Activated CD4-positive, alpha-beta memory T cell treated with anti-CD3 and anti-CD28 coated beads for 36 hours (primary cell): ENCODE measurements at regions of chr22 and their contacts with region 1.

Region 1: DNA sequence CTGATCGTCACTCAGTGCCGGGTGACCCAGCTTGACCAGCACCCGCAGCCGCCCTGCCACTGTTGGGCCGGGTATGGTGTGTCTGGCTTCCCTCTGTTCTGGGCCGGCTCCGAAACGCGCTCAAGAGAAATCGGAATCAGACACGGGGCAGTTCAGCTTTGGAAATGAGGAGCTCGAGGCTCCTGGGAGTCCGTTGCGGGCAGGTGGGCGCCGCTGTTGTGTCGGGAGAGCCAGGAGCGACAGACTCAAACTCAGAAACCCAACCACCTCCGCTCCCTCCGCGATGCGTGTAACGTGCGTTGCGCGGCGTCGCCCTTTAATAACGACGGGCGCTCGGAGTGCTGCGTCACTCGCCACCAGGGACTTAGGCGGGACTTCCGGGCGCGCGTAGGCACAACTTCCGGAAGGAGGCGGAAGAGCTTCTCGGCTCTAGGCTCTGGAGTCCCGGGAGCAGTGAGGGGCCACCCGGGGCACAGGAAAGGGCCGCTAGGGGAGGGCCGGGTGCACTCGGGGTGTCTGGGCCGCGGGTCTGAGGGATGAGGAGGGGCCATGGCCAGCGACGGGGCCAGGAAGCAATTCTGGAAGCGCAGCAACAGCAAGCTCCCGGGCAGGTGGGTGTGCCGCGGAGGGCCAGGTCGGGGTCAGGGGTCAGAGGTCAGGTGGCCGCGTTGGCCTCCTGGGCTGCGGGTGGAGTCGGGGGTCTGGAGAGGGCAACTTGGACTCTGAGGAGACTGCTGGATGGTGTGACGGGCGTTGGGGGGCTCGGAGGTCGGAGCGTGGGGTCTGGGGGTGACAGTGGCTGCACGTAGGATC is at the start of gene TBC1D22A:
- DNase-seq: peak; percentile 97
- H3K4me3 Mint-ChIP-seq: peak within 1 kb of the TSS; percentile 100
- H3K27ac Mint-ChIP-seq: peak within 1 kb of the TSS; percentile 97
- H3K4me1 Mint-ChIP-seq: peaks cover 59% of the 10 kb centered on the region
- H3K27me3 Mint-ChIP-seq: no peaks in the 10 kb centered on the region
- total RNA-seq, gene TBC1D22A: 33.2 to 34.9 TPM

Region 2: DNA sequence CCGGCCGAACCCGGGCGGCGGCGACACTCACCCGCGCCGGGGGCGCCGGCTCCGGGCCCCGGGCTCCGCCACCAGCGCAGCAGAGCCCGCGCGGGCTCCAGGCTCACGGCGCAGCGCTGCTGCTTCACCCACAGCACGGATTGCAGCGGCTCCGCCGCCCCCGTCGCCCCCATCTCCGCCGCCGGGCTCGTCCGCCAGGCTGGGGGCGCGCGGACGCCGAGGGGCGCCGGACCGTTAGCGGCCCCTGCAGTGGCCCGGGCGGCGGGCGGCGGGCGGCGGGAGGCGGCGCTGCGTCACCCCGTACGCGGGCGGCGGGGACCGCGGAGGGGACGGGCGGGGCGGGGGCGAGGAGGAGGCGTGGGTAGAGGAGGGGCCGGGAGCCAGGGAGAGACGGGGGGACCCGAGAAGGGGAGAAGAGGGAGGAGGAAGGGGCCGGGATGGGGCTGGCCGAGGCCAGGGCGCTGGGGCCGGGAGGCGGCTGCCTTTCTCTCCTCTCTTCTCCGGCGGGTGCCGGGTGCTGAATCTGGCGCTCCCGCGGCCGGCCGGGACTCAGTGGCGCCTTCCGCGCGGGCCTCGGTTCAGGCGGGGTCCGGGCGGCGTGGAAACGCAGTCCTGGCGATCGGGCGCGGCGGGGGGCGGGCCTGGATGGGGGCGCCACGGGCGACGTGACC is 24.3 kb before region 1 on chr22 and contains the start of gene CERK:
- CTCF ChIA-PET with region 1: interaction called, 24 read pairs
- POLR2A ChIA-PET with region 1: interaction called, 7 read pairs
- intact Hi-C with region 1: loop called (anchors 2 kb)
- DNase-seq: peak; percentile 72
- H3K4me3 Mint-ChIP-seq: peak within 1 kb of the TSS; percentile 96
- H3K27ac Mint-ChIP-seq: peak within 1 kb of the TSS; percentile 93
- H3K4me1 Mint-ChIP-seq: peaks cover 33% of the 10 kb centered on the region
- H3K27me3 Mint-ChIP-seq: no peaks in the 10 kb centered on the region
- total RNA-seq, gene CERK: 54.4 to 55.0 TPM

Region 3: DNA sequence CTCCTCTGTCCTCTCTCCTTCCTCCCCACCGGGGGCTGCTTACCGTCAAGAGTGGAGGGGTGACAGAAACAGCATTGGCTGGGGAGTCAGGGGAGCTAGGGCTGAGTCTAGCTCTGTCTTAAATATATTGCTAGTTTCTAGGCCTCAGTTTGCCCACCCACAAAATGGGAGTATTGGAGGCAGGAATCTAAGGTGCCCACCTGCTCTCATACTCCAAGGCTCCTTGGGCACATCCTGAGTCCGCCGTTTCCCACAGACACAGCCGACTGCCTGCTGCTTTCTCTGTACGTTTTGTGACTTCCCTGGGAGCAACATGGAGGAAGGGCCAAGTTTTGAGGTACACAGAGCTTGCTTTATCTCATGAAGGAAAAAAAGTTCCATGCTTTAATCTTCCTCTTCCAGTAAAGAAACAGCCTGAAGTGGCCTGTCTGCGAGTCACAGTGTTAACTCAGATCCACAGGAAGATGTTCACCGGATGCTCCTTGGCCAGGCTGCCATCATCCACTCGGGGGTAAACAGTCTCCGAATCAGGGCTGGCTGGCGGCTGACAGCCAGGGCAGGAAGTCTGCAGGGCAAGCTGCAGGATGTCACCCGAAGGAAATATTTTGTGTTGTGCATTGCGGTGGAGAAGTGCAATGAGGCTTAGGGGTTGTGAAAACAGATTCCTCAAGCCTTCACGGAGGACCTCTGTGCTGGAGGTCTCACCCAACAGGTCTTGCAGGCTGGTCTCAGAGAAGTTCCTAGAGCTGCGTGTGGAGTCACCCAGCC is 13.4 kb before region 1 on chr22:
- CTCF ChIA-PET with region 1: interaction called, 57 read pairs
- POLR2A ChIA-PET with region 1: interaction called, 12 read pairs
- intact Hi-C with region 1: no loop called
- DNase-seq: peak; percentile 69
- H3K4me3 Mint-ChIP-seq: peak overlapping the region; percentile 46
- H3K27ac Mint-ChIP-seq: peak overlapping the region; percentile 74
- H3K4me1 Mint-ChIP-seq: peaks cover 28% of the 10 kb centered on the region
- H3K27me3 Mint-ChIP-seq: no peaks in the 10 kb centered on the region

Region 4: DNA sequence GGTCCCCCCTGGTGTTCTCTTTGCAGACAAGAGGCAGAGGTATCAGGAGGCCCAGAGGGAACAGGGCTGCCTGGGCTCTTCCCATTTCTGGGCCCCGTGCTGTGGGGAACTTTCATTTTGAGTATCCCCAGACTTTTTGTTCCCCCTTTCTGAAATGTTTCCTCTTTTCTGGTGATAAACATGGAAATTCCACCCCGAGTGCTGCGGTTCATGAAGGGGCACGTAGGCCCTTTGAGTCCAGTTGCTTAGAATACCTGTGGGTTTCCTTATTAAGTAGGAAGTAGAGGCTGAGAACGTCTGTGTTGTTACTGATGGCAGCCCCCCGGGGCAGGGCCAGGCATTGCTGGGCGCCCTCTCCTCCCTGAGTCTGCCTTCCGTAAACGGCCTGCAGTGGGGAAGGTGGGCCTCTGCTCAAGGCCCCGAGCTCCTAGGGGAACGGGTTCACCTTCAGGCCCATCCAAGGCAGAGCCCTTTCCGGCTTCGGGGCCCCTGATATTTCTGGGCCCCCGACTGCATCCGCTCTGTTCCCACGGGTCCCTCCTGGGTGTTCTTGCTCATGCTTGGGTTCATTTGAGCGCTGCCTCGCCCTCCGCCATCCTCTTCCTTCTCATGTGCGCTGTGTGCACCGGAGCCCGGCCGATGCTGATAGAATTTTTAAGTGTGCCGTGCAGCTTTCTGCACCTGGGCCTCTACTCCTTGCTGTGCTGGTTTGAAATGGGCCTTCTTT is 12.0 kb after region 1 on chr22:
- CTCF ChIA-PET with region 1: interaction called, 26 read pairs
- POLR2A ChIA-PET with region 1: interaction called, 32 read pairs
- intact Hi-C with region 1: loop called (anchors 1 kb)
- DNase-seq: peak; percentile 53
- H3K4me3 Mint-ChIP-seq: peak overlapping the region; percentile 63
- H3K27ac Mint-ChIP-seq: peak overlapping the region; percentile 87
- H3K4me1 Mint-ChIP-seq: peaks cover 76% of the 10 kb centered on the region
- H3K27me3 Mint-ChIP-seq: no peaks in the 10 kb centered on the region

Region 5: DNA sequence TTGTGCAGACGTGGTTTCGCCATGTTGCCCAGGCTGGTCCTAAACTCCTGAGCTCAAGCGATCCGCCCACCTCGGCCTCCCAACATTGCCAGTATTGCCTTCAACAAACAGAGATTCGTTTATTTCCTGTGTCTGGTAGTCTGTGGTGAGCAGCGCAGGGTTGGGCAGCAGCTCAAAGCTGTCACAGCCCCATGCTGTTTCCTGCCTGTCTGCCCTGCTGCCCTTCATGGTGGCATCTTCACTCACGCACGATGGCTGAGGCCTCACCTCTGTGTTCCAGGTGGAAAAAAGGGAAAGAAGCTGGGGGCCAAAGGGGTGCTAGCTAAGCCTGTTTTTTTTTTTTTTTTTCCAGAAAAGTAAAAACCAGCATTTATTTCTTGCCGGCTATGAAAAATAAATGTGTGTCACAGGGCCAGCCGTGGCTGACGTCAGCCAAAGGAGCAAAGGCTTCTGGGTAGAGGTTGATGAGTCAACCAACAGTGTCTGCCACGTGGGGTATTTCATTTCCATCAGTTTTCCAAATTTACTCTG is 28.8 kb after region 1 on chr22:
- CTCF ChIA-PET with region 1: interaction called, 11 read pairs
- POLR2A ChIA-PET with region 1: interaction called, 10 read pairs
- intact Hi-C with region 1: loop called (anchors 1 kb)
- DNase-seq: peak; percentile 86
- H3K4me3 Mint-ChIP-seq: peak overlapping the region; percentile 80
- H3K27ac Mint-ChIP-seq: peak overlapping the region; percentile 99
- H3K4me1 Mint-ChIP-seq: peaks cover 57% of the 10 kb centered on the region
- H3K27me3 Mint-ChIP-seq: no peaks in the 10 kb centered on the region

Region 6: GRCh38 chr22:46798366-46799350 is 36.2 kb after region 1 on chr22:
- CTCF ChIA-PET with region 1: interaction called, 180 read pairs
- POLR2A ChIA-PET with region 1: interaction called, 8 read pairs
- intact Hi-C with region 1: loop called (anchors 1 kb)
- DNase-seq: peak; percentile 85
- H3K4me3 Mint-ChIP-seq: no peak overlapping the region
- H3K27ac Mint-ChIP-seq: peak overlapping the region; percentile 4
- H3K4me1 Mint-ChIP-seq: peaks cover 21% of the 10 kb centered on the region
- H3K27me3 Mint-ChIP-seq: no peaks in the 10 kb centered on the region

Region 7: DNA sequence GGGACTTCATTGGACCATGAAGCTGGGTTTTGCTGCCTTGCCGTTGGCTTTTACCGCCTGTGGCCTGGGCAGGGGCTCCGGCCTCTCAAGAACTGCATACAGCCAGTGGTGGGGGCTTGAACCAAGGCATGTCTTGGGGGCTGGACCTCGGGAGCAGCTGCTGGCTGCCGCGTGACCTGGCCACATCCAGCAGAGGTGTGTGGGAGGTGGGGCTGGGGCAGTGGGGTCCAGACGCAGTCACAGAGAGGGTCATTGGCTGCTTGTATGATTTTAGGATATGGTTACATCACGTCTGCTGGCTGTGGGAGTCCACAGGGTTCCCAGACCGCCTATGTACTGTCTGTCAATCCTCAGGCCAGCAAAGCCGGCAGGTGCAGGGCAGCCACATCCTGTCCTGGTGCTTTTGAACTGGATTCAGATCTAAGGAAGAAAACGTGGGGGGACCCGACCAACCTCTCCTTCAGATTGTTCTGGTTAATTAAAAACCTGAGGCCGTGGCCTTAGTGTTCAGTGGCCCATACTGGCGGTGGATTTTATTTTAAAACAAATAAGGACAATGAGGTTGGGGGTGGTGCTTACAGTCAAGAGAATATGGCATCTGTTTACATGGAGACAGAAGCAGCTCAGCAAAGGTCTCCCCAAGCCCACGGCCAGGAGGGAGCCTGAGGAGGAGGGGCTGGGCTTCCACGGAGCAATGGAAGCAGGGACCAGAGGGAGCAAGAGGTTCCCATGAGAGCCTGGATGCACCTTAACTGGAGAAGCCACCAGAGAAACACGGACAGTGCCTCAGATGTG is 426.0 kb after region 1 on chr22:
- CTCF ChIA-PET with region 1: no interaction called
- POLR2A ChIA-PET with region 1: no interaction called
- intact Hi-C with region 1: no loop called
- DNase-seq: no peak
- H3K4me3 Mint-ChIP-seq: no peak overlapping the region
- H3K27ac Mint-ChIP-seq: no peak overlapping the region
- H3K4me1 Mint-ChIP-seq: no peaks in the 10 kb centered on the region
- H3K27me3 Mint-ChIP-seq: no peaks in the 10 kb centered on the region